ENCODE measurements at regions of chr17 and their contacts with region 1.

Region 1: GRCh38 chr17:69523244-69523861 is 108.9 kb downstream of the MAP2K6 start:
- DNase-seq: no peak
- ATAC-seq: peak; percentile 45
- H3K4me3 Mint-ChIP-seq: no peak overlapping the region
- H3K27ac Mint-ChIP-seq: no peak overlapping the region
- H3K4me1 Mint-ChIP-seq: peaks cover 8% of the 10 kb centered on the region
- H3K27me3 Mint-ChIP-seq: peaks cover 17% of the 10 kb centered on the region
- CTCF ChIP-seq: no peak

Region 2: GRCh38 chr17:69246726-69247375 is 276.5 kb before region 1 on chr17:
- CTCF ChIA-PET with region 1: interaction called, 5 read pairs
- POLR2A ChIA-PET with region 1: no interaction called
- intact Hi-C with region 1: loop called (anchors 2 kb)
- DNase-seq: no peak
- ATAC-seq: peak; percentile 28
- H3K4me3 Mint-ChIP-seq: no peak overlapping the region
- H3K27ac Mint-ChIP-seq: no peak overlapping the region
- H3K4me1 Mint-ChIP-seq: no peaks in the 10 kb centered on the region
- H3K27me3 Mint-ChIP-seq: no peaks in the 10 kb centered on the region
- CTCF ChIP-seq: peak; percentile 66

Region 3: GRCh38 chr17:69358688-69359596 is 164.4 kb before region 1 on chr17:
- CTCF ChIA-PET with region 1: interaction called, 5 read pairs
- POLR2A ChIA-PET with region 1: no interaction called
- intact Hi-C with region 1: loop called (anchors 1 kb)
- DNase-seq: no peak
- ATAC-seq: peak; percentile 52
- H3K4me3 Mint-ChIP-seq: no peak overlapping the region
- H3K27ac Mint-ChIP-seq: no peak overlapping the region
- H3K4me1 Mint-ChIP-seq: peaks cover 2% of the 10 kb centered on the region
- H3K27me3 Mint-ChIP-seq: peaks cover 6% of the 10 kb centered on the region
- CTCF ChIP-seq: no peak

Region 4: GRCh38 chr17:70144260-70144846 is 621.0 kb after region 1 on chr17:
- CTCF ChIA-PET with region 1: interaction called, 5 read pairs
- POLR2A ChIA-PET with region 1: no interaction called
- intact Hi-C with region 1: loop called (anchors 1 kb)
- DNase-seq: no peak
- ATAC-seq: no peak
- H3K4me3 Mint-ChIP-seq: no peak overlapping the region
- H3K27ac Mint-ChIP-seq: no peak overlapping the region
- H3K4me1 Mint-ChIP-seq: no peaks in the 10 kb centered on the region
- H3K27me3 Mint-ChIP-seq: no peaks in the 10 kb centered on the region
- CTCF ChIP-seq: peak; percentile 70

Region 5: GRCh38 chr17:70622368-70623260 is 1099.3 kb after region 1 on chr17:
- CTCF ChIA-PET with region 1: no interaction called
- POLR2A ChIA-PET with region 1: no interaction called
- intact Hi-C with region 1: loop called (anchors 2 kb)
- DNase-seq: no peak
- ATAC-seq: no peak
- H3K4me3 Mint-ChIP-seq: no peak overlapping the region
- H3K27ac Mint-ChIP-seq: no peak overlapping the region
- H3K4me1 Mint-ChIP-seq: no peaks in the 10 kb centered on the region
- H3K27me3 Mint-ChIP-seq: no peaks in the 10 kb centered on the region
- CTCF ChIP-seq: no peak